ENCODE measurements at regions of chr12 and their contacts with region 1.

Region 1: DNA sequence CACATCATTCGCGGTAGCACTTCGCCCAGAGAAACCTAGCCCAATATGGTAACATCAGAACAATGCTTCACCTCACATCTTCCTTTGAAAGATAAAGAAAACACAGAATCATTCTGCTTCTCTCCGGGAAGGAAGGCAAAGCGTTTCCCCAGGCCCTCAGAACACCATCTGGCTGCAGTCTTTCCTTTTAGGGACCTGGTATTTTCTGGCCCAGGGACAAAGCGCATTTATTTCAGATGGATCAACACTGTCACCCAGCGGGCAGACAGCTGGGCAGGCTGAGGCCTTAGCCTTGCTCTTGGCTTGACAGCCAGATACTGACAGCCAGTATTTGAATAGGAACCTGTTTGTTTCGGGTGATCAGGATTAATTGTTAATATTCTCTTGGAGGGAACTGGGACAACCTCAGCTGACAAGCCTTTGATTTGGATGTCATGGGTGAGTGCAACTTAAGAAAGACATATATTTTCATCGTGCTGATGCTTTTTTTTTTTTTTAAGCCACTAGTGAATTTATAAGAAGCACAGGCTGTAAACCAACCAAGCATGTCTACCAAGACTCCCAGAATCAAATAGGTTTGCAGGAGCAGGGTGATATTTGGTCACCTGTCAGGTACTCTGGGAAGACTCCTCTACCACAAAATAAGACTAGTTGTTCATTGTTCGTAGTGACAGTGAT is 118.9 kb downstream of the VEZT start:
- DNase-seq: peak; percentile 80
- H3K4me3 ChIP-seq: no peak overlapping the region
- H3K27ac ChIP-seq: no peak overlapping the region
- H3K4me1 ChIP-seq: peaks cover 18% of the 10 kb centered on the region
- H3K27me3 ChIP-seq: no peaks in the 10 kb centered on the region
- CTCF ChIP-seq: peak; percentile 85

Region 2: DNA sequence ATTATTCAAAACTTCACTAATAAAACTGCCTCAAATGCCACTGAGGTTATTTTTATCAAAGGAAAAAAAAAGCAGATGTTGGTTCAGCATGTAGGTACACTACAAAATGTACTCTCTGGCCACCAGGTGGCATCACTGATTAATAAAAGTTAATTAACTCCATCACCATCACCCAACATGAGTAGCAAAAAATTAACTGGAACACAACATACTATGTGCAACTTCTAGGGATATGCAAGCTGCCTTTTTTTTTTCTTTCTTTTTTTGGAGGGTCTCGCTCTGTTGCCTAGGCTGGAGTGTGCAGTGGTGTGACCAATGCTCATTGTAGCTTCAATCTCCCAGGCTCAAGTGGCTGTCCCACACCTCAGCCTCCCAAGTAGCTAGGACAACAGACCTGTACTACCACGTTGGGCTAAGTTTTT is 219.3 kb before region 1 on chr12:
- CTCF ChIA-PET with region 1: interaction called, 3 read pairs
- POLR2A ChIA-PET with region 1: no interaction called
- intact Hi-C with region 1: loop called (anchors 1 kb)
- DNase-seq: peak; percentile 84
- H3K4me3 ChIP-seq: no peak overlapping the region
- H3K27ac ChIP-seq: no peak overlapping the region
- H3K4me1 ChIP-seq: no peaks in the 10 kb centered on the region
- H3K27me3 ChIP-seq: no peaks in the 10 kb centered on the region
- CTCF ChIP-seq: peak; percentile 78

Region 3: DNA sequence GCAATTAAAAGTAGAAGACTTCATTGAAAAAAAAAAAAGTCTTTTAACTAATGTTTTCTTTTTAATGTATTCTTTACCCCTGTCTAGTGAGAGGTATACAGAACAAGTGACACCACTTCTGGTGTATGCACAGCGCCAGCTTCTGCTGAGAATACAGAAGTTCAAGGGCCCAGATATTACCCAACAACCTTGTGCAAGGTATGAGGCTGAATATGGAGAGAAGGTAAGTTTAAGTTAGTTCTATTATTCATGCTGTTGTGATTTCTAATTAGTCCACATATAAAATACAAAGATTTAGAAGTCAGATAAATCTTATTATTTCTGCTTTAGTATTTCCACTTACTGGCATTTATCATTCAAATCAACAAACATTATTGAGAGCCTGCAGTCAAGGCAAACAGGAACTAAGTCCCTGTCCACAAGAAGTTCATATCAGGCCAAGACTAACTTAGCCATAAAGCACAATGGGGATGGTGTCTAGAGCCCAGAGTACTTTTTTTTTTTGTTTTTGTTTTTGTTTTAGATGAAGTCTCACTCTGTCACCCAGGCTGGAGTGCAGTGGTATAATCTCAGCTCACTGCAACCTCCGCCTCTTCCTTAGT is 1321.7 kb after region 1 on chr12:
- CTCF ChIA-PET with region 1: no interaction called
- POLR2A ChIA-PET with region 1: no interaction called
- intact Hi-C with region 1: no loop called
- DNase-seq: no peak
- H3K4me3 ChIP-seq: no peak overlapping the region
- H3K27ac ChIP-seq: no peak overlapping the region
- H3K4me1 ChIP-seq: no peaks in the 10 kb centered on the region
- H3K27me3 ChIP-seq: no peaks in the 10 kb centered on the region
- CTCF ChIP-seq: no peak

Measured in A673 (cell line).